ENCODE measurements at regions of chr2 and their contacts with region 1.

Region 1: DNA sequence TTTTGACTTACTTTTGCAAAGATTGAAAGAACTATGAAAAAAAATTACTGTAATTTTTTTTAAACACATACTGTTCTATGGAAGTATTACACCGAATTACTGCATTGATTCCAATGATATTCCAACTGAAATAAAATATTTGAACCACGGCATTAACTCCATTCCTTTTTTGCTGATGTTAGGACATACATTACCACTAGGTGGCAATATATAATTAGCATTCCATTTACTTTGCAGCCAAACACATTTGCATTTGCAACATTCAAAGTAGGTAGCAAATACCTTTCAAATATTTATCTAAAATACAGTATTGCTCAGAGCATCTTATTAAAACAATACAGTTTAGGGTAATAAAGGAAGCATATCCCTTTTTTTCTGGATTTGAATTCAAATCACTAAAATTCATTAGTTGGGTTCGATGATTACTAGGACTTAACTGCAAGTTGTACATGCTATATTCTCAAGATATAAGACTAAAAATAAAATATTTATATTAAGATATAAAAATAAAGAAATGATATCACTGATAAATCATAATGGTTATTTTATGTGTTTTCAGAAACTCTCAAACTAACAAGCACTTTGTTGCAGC is 31.3 kb downstream of the LANCL1 start:
- DNase-seq: no peak
- ATAC-seq: peak; percentile 25
- H3K4me3 Mint-ChIP-seq: no peak overlapping the region
- H3K27ac Mint-ChIP-seq: no peak overlapping the region
- H3K4me1 Mint-ChIP-seq: peaks cover 22% of the 10 kb centered on the region
- H3K27me3 Mint-ChIP-seq: no peaks in the 10 kb centered on the region
- CTCF ChIP-seq: no peak

Region 2: DNA sequence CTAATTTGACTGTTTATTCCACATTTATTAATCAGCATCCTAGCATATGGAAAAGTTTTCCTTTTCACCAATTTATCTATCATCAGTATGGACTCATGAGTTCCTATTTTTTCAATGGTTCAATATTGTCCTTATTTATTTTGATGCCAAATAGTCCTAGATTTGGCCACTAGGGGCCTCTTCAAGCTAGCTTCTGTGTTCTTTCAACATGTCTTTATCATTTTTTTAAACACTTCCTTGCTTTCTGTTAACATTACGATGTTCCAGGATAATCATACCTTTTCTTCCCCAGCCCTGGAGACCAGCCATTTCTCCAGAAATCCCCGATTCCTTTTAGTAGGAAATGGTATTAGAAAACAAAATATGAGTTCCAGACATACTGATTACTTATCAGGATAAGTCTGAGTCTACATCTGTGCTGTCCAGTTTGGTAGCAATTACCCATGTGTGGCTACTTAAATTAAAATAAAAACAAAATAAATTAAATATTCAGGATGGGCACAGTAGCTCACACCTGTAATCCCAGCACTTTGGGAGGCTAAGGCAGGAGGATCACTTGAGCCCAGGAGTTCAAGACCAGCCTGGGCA is 372.2 kb before region 1 on chr2:
- CTCF ChIA-PET with region 1: no interaction called
- POLR2A ChIA-PET with region 1: no interaction called
- intact Hi-C with region 1: no loop called
- DNase-seq: no peak
- ATAC-seq: no peak
- H3K4me3 Mint-ChIP-seq: no peak overlapping the region
- H3K27ac Mint-ChIP-seq: no peak overlapping the region
- H3K4me1 Mint-ChIP-seq: no peaks in the 10 kb centered on the region
- H3K27me3 Mint-ChIP-seq: no peaks in the 10 kb centered on the region
- CTCF ChIP-seq: no peak

Region 3: GRCh38 chr2:210476194-210477128 is 31.2 kb after region 1 on chr2 and contains the start of gene LANCL1:
- CTCF ChIA-PET with region 1: interaction called, 3 read pairs
- POLR2A ChIA-PET with region 1: interaction called, 3 read pairs
- intact Hi-C with region 1: loop called (anchors 1 kb)
- DNase-seq: peak; percentile 70
- ATAC-seq: peak; percentile 100
- H3K4me3 Mint-ChIP-seq: peak within 1 kb of the TSS; percentile 99
- H3K27ac Mint-ChIP-seq: peak within 1 kb of the TSS; percentile 98
- H3K4me1 Mint-ChIP-seq: peaks cover 31% of the 10 kb centered on the region
- H3K27me3 Mint-ChIP-seq: no peaks in the 10 kb centered on the region
- CTCF ChIP-seq: no peak
- total RNA-seq, gene LANCL1: 30.4 and 30.8 TPM in 2 replicates

Region 4: DNA sequence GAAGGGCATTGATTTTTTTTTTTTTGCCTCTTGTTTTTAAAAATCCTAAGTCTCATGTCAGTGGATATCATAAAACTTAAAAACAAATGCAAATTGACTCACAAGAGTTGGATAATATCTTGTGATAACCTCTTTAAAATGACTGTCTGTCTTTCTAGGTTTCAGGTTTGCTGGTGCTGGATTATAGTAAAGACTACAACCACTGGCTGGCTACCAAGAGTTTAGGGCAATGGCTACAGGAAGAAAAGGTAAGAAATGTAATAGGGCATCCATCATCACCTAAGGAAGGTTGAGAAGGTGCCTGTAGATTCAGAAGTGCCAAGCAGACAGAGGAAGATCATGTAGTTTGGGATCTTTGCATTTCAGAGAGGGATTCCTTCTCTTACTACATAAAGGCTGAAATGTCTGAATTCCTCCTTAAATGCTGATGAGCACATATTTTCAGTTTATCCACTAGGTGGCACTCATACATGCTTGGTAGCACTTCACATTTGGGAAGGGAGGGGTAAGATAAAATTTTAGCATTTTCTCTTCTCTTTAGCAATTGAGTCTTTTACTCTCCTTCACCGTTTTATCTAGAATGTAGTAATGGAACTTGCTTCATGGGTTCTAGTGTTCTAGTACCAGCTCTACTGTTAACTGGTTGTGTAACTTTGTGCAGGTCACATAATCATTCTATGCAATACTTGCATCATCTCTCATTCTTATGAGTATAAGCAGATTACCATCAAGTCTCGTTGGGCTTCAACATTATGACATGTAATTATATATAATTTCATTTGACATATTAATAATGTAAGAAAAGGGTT is 132.3 kb after region 1 on chr2:
- CTCF ChIA-PET with region 1: no interaction called
- POLR2A ChIA-PET with region 1: no interaction called
- intact Hi-C with region 1: loop called (anchors 1 kb)
- DNase-seq: no peak
- ATAC-seq: no peak
- H3K4me3 Mint-ChIP-seq: no peak overlapping the region
- H3K27ac Mint-ChIP-seq: no peak overlapping the region
- H3K4me1 Mint-ChIP-seq: no peaks in the 10 kb centered on the region
- H3K27me3 Mint-ChIP-seq: peaks cover 4% of the 10 kb centered on the region
- CTCF ChIP-seq: no peak

Region 5: GRCh38 chr2:210630873-210631560 is 185.8 kb after region 1 on chr2:
- CTCF ChIA-PET with region 1: no interaction called
- POLR2A ChIA-PET with region 1: no interaction called
- intact Hi-C with region 1: no loop called
- DNase-seq: no peak
- ATAC-seq: no peak
- H3K4me3 Mint-ChIP-seq: no peak overlapping the region
- H3K27ac Mint-ChIP-seq: no peak overlapping the region
- H3K4me1 Mint-ChIP-seq: no peaks in the 10 kb centered on the region
- H3K27me3 Mint-ChIP-seq: peaks cover 2% of the 10 kb centered on the region
- CTCF ChIP-seq: no peak

Region 6: GRCh38 chr2:211093743-211094303 is 648.6 kb after region 1 on chr2:
- CTCF ChIA-PET with region 1: no interaction called
- POLR2A ChIA-PET with region 1: no interaction called
- intact Hi-C with region 1: loop called (anchors 2 kb)
- DNase-seq: no peak
- ATAC-seq: no peak
- H3K4me3 Mint-ChIP-seq: no peak overlapping the region
- H3K27ac Mint-ChIP-seq: no peak overlapping the region
- H3K4me1 Mint-ChIP-seq: no peaks in the 10 kb centered on the region
- H3K27me3 Mint-ChIP-seq: no peaks in the 10 kb centered on the region
- CTCF ChIP-seq: no peak

Measured in activated B cell treated with CpG ODN at 0.5 μM for 24 hours (primary cell).